ENCODE measurements at regions of chr2 and their contacts with region 1.

Region 1: GRCh38 chr2:160472839-160473251 is 20.8 kb downstream of the RBMS1 start:
- DNase-seq: peak in 1 of 9 donors; percentile 19
- ATAC-seq: no peak
- H3K4me3 ChIP-seq: no peak overlapping the region
- H3K4me3 Mint-ChIP-seq: peak overlapping the region in 9 of 10 donors; percentile 40 to 77 (median 64)
- H3K27ac ChIP-seq: peak overlapping the region; percentile 70
- H3K27ac Mint-ChIP-seq: peak overlapping the region; percentile 78 to 98 (median 90)
- H3K4me1 ChIP-seq: peaks cover 0 to 56% of the 10 kb centered on the region in 2 donors
- H3K4me1 Mint-ChIP-seq: peaks cover 22 to 96% (median 88%) of the 10 kb centered on the region in 7 donors
- H3K27me3 ChIP-seq: no peaks in the 10 kb centered on the region
- H3K27me3 Mint-ChIP-seq: no peaks in the 10 kb centered on the region

Region 2: GRCh38 chr2:160175169-160176134 is 297.4 kb before region 1 on chr2:
- CTCF ChIA-PET with region 1: no interaction called
- POLR2A ChIA-PET with region 1: no interaction called
- intact Hi-C with region 1: no loop called
- DNase-seq: no peak
- ATAC-seq: no peak
- H3K4me3 ChIP-seq: no peak overlapping the region
- H3K4me3 Mint-ChIP-seq: no peak overlapping the region
- H3K27ac ChIP-seq: no peak overlapping the region
- H3K27ac Mint-ChIP-seq: no peak overlapping the region
- H3K4me1 ChIP-seq: peaks cover 0 to 1% of the 10 kb centered on the region in 2 donors
- H3K4me1 Mint-ChIP-seq: peaks cover 0 to 4% (median under 1%) of the 10 kb centered on the region in 7 donors
- H3K27me3 ChIP-seq: no peaks in the 10 kb centered on the region
- H3K27me3 Mint-ChIP-seq: peaks cover 0 to 3% (median 0%) of the 10 kb centered on the region in 5 donors

Region 3: GRCh38 chr2:160417745-160418397 is 55.0 kb before region 1 on chr2:
- CTCF ChIA-PET with region 1: no interaction called
- POLR2A ChIA-PET with region 1: no interaction called
- intact Hi-C with region 1: no loop called
- DNase-seq: peak in 4 of 9 donors; percentile 31 to 76 (median 56)
- ATAC-seq: peak; percentile 84
- H3K4me3 ChIP-seq: no peak overlapping the region
- H3K4me3 Mint-ChIP-seq: peak overlapping the region in 6 of 10 donors; percentile 7 to 52 (median 36)
- H3K27ac ChIP-seq: peak overlapping the region; percentile 43
- H3K27ac Mint-ChIP-seq: peak overlapping the region; percentile 36 to 90 (median 75)
- H3K4me1 ChIP-seq: peaks cover 10 to 31% of the 10 kb centered on the region in 2 donors
- H3K4me1 Mint-ChIP-seq: peaks cover 34 to 88% (median 72%) of the 10 kb centered on the region in 7 donors
- H3K27me3 ChIP-seq: no peaks in the 10 kb centered on the region
- H3K27me3 Mint-ChIP-seq: peaks cover 0 to 3% (median 0%) of the 10 kb centered on the region in 5 donors

Region 4: GRCh38 chr2:160457588-160457987 is 15.3 kb before region 1 on chr2:
- CTCF ChIA-PET with region 1: interaction called, 3 read pairs
- POLR2A ChIA-PET with region 1: no interaction called
- intact Hi-C with region 1: loop called in 1 of 2 experiments (anchors 2 kb)
- DNase-seq: no peak
- ATAC-seq: no peak
- H3K4me3 ChIP-seq: no peak overlapping the region
- H3K4me3 Mint-ChIP-seq: peak overlapping the region in 3 of 10 donors; percentile 22 to 43 (median 25)
- H3K27ac ChIP-seq: no peak overlapping the region
- H3K27ac Mint-ChIP-seq: peak overlapping the region in 2 of 9 donors; percentile 42 to 46
- H3K4me1 ChIP-seq: peaks cover 6 to 36% of the 10 kb centered on the region in 2 donors
- H3K4me1 Mint-ChIP-seq: peaks cover 31 to 66% (median 59%) of the 10 kb centered on the region in 7 donors
- H3K27me3 ChIP-seq: no peaks in the 10 kb centered on the region
- H3K27me3 Mint-ChIP-seq: no peaks in the 10 kb centered on the region

Region 5: DNA sequence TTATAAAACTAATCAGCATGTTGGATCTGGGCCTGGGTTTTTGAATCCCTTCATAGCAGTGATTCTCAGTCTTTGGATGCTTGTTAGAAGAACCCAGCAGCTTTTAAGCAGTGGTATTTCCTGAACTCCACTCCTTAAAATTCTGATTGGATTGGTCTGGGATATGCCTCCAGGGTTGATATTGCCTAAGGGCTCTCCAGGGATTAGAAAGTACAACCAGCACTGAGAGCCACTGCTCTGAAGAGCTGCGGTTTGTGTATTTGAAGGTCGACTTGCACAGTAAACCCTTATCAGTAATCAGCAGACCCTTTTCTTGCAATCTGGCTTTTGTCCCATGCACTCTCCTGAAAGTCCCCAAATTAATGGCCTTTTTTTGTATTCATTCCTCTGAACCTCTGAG is 37.8 kb after region 1 on chr2:
- CTCF ChIA-PET with region 1: no interaction called
- POLR2A ChIA-PET with region 1: no interaction called
- intact Hi-C with region 1: no loop called
- DNase-seq: no peak
- ATAC-seq: no peak
- H3K4me3 ChIP-seq: no peak overlapping the region
- H3K4me3 Mint-ChIP-seq: no peak overlapping the region
- H3K27ac ChIP-seq: no peak overlapping the region
- H3K27ac Mint-ChIP-seq: peak overlapping the region in 1 of 9 donors; percentile 46
- H3K4me1 ChIP-seq: peaks cover 12% of the 10 kb centered on the region in 2 donors
- H3K4me1 Mint-ChIP-seq: peaks cover 7 to 49% (median 42%) of the 10 kb centered on the region in 7 donors
- H3K27me3 ChIP-seq: no peaks in the 10 kb centered on the region
- H3K27me3 Mint-ChIP-seq: no peaks in the 10 kb centered on the region

Region 6: GRCh38 chr2:161030260-161031063 is 557.6 kb after region 1 on chr2:
- CTCF ChIA-PET with region 1: no interaction called
- POLR2A ChIA-PET with region 1: no interaction called
- intact Hi-C with region 1: no loop called
- DNase-seq: no peak
- ATAC-seq: no peak
- H3K4me3 ChIP-seq: no peak overlapping the region
- H3K4me3 Mint-ChIP-seq: no peak overlapping the region
- H3K27ac ChIP-seq: no peak overlapping the region
- H3K27ac Mint-ChIP-seq: no peak overlapping the region
- H3K4me1 ChIP-seq: no peaks in the 10 kb centered on the region
- H3K4me1 Mint-ChIP-seq: peaks cover 0 to 5% (median 5%) of the 10 kb centered on the region in 7 donors
- H3K27me3 ChIP-seq: no peaks in the 10 kb centered on the region
- H3K27me3 Mint-ChIP-seq: peaks cover 0 to 5% (median 2%) of the 10 kb centered on the region in 5 donors

Region 7: GRCh38 chr2:161136696-161137324 is 664.0 kb after region 1 on chr2:
- CTCF ChIA-PET with region 1: no interaction called
- POLR2A ChIA-PET with region 1: no interaction called
- intact Hi-C with region 1: loop called in 1 of 2 experiments (anchors 1 kb)
- DNase-seq: peak in 6 of 9 donors; percentile 31 to 76 (median 48)
- ATAC-seq: peak; percentile 94
- H3K4me3 ChIP-seq: peak overlapping the region; percentile 67
- H3K4me3 Mint-ChIP-seq: peak overlapping the region; percentile 68 to 98 (median 91)
- H3K27ac ChIP-seq: peak overlapping the region; percentile 83
- H3K27ac Mint-ChIP-seq: peak overlapping the region; percentile 89 to 99 (median 95)
- H3K4me1 ChIP-seq: peaks cover 21 to 27% of the 10 kb centered on the region in 2 donors
- H3K4me1 Mint-ChIP-seq: peaks cover 23 to 71% (median 58%) of the 10 kb centered on the region in 7 donors
- H3K27me3 ChIP-seq: no peaks in the 10 kb centered on the region
- H3K27me3 Mint-ChIP-seq: no peaks in the 10 kb centered on the region

Measured in naive thymus-derived CD4-positive, alpha-beta T cell (primary cell).